ENCODE measurements at regions of chr1 and their contacts with region 1.

Region 1: GRCh38 chr1:92623187-92623778 is 136.6 kb upstream of the GFI1 start:
- DNase-seq: peak; percentile 54

Region 2: DNA sequence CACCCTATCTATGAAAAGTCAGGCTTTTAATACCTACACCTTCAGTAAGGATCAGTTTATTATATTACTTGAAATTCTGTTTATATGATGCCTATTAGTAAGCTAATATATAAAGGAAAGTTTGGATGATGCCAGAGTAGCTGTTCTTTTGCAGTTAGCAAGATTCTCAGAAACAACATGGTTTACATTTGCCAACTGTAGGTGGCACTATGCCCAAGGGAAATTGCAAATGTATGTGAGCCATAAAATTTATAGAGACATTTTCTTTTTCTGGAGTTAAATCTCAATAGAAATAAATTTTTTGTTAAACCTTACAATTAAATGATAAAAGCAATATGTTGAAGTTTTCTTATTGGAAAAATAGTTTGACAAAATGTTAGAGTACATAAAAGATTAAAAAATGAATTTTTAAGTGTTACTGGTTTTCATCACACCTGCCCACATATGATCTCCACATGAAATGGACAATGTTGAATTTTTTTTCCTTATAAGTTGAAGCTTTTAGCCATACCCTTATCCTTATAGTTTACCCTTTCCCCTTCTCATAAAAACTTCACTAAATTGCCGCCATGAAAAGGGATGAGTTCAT is 625.6 kb before region 1 on chr1:
- in situ Hi-C with region 1: loop called (anchors 25 kb)
- DNase-seq: peak; percentile 54

Region 3: DNA sequence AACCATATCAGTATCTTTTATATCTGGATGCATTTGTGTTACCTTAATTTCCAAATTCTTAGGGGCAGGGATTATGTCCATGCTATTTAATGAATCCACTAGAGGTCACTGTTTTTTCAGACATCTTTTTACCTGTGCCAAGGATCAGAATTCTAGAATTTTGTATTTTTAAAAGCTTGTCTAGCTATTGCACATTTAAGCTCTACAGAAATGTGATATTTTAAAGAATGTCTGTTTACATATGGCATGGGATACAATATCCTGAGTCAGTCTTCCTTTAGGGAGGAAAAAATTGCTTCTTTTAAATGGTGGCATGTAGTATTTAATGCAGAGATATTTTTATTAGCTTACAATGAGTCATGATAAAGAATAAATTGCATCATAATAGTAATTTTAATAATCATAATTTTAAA is 313.1 kb before region 1 on chr1:
- in situ Hi-C with region 1: loop called (anchors 25 kb)
- DNase-seq: peak; percentile 68